ENCODE measurements at regions of chr12 and their contacts with region 1.

Region 1: DNA sequence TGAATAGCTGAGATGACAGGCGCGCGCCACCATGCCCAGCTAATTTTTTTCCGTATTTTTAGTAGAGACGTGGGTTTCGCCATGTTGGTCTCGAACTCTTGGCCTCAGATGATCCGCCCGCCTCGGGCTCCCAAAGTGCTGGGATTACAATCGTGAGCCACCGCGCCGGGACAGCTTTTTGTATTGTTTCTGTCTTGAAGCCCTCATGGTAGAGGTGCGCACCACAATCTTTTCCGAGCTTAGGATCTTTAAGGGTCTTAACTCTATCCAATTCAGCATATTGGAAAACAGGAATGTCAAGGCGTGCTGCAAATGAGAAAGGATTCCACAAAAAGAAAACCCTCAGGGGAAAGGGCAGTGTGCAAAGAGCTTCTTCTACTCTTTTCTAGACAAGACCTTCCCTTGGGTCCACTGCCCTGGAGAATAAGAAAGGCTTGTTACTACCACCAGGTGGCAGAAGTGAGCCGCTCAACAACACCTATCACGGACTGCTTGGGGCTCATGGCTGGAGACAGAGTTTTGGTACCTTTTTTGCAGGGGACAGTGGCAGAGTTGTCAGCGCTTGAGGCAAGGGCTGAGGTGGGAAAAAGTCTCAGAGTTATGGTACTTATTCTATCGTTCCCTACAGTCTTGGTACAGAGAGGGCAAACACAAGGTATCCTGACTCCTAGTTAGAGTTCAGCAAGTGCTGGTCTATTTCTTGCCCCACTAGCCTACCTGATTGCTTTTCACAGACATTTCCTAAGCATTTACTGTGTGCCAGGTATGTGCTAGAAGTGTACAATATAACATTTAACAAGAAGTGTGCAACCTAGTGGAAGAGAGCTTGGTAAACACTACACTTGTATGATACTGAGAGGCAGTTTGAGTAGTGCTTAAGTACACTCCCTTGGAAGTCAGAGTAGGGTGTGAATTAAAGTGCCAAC is 16.4 kb upstream of the SP7 start:
- DNase-seq: peak; percentile 76
- ATAC-seq: peak; percentile 98
- H3K4me3 ChIP-seq: no peak overlapping the region
- H3K27ac ChIP-seq: no peak overlapping the region
- H3K4me1 ChIP-seq: peaks cover 7% of the 10 kb centered on the region
- H3K27me3 ChIP-seq: no peaks in the 10 kb centered on the region
- CTCF ChIP-seq: peak; percentile 90

Region 2: GRCh38 chr12:53424626-53425514 is 72.3 kb after region 1 on chr12:
- intact Hi-C with region 1: loop called (anchors 5 kb)
- DNase-seq: no peak
- ATAC-seq: no peak
- H3K4me3 ChIP-seq: no peak overlapping the region
- H3K27ac ChIP-seq: no peak overlapping the region
- H3K4me1 ChIP-seq: peaks cover 3% of the 10 kb centered on the region
- H3K27me3 ChIP-seq: no peaks in the 10 kb centered on the region
- CTCF ChIP-seq: no peak

Region 3: GRCh38 chr12:53500776-53501614 is 148.4 kb after region 1 on chr12 and contains the start of gene TARBP2:
- intact Hi-C with region 1: loop called (anchors 10 kb)
- DNase-seq: peak; percentile 98
- ATAC-seq: peak; percentile 87
- H3K4me3 ChIP-seq: peak within 1 kb of the TSS; percentile 77
- H3K27ac ChIP-seq: peak within 1 kb of the TSS; percentile 97
- H3K4me1 ChIP-seq: peaks cover 39% of the 10 kb centered on the region
- H3K27me3 ChIP-seq: no peaks in the 10 kb centered on the region
- CTCF ChIP-seq: no peak
- total RNA-seq, gene TARBP2: 33.1 TPM